HCT116 (cell line): ENCODE measurements at regions of chr17 and their contacts with region 1.

Region 1: GRCh38 chr17:44543213-44543904 is 13.9 kb upstream of the FZD2 start:
- DNase-seq: no peak
- ATAC-seq: peak; percentile 81
- H3K4me3 ChIP-seq: peak overlapping the region; percentile 9 to 46; a peak in 3 of 4 replicates
- H3K27ac ChIP-seq: peak overlapping the region; percentile 79
- H3K4me1 ChIP-seq: peaks cover 42 to 72% of the 10 kb centered on the region in 2 experiments
- H3K27me3 ChIP-seq: no peaks in the 10 kb centered on the region
- CTCF ChIP-seq: no peak
- POLR2A ChIP-seq: no peak
- RAD21 ChIP-seq: no peak

Region 2: GRCh38 chr17:44487170-44487569 is 56.2 kb before region 1 on chr17:
- CTCF ChIA-PET with region 1: no interaction called
- POLR2A ChIA-PET with region 1: no interaction called
- RAD21 ChIA-PET with region 1: no interaction called
- intact Hi-C with region 1: no loop called
- DNase-seq: no peak
- ATAC-seq: no peak
- H3K4me3 ChIP-seq: no peak overlapping the region
- H3K27ac ChIP-seq: no peak overlapping the region
- H3K4me1 ChIP-seq: no peaks in the 10 kb centered on the region
- H3K27me3 ChIP-seq: no peaks in the 10 kb centered on the region
- CTCF ChIP-seq: no peak
- POLR2A ChIP-seq: no peak
- RAD21 ChIP-seq: no peak

Region 3: DNA sequence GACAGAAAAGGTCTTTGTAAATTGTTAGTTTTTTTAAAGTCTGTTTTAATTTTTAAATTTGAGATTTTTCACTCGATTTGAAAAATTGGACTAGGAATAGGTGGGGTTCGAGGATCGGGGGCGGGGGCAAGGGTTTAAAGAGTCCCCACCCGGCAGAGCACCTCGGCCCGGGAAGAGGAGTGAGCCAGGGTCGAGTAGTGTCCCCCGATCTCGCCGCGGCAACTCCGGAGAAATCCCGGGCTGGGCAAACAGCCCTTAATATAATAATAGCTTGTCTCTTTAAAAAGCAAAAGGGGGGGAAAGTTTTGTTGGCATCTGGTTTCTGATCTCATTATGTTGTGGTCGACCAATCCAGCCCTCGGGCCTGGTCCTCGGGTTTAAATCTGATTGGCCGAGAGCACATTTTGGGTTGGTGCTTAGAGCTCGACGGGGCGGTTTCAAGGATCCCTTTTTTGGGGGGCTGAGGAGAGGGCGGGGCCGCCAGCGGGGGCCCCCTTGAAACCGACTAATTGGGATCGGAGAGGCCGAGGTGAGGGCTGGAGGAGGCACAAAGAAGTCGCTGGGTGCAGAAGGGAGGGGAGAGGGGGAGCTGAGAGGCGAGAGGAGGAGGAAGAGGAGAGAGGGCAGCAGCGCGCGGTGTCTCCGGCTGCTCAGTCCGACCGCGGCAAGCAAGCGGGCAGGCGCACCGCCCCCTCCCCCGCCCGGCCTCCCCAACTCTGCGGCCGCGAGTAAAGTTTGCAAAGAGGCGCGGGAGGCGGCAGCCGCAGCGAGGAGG is 13.7 kb after region 1 on chr17 and contains the start of gene FZD2:
- CTCF ChIA-PET with region 1: interaction called, 5 read pairs
- POLR2A ChIA-PET with region 1: interaction called, 12 read pairs
- RAD21 ChIA-PET with region 1: no interaction called
- intact Hi-C with region 1: no loop called
- DNase-seq: peak; percentile 91
- ATAC-seq: peak; percentile 91
- H3K4me3 ChIP-seq: peak within 1 kb of the TSS; percentile 68 to 71
- H3K27ac ChIP-seq: peak within 1 kb of the TSS; percentile 62
- H3K4me1 ChIP-seq: peaks cover 3 to 14% of the 10 kb centered on the region in 2 experiments; a peak in 3 of 4 replicates
- H3K27me3 ChIP-seq: no peaks in the 10 kb centered on the region
- CTCF ChIP-seq: no peak
- POLR2A ChIP-seq: no peak
- RAD21 ChIP-seq: no peak
- total RNA-seq, gene FZD2: 12.8 TPM